Calu3 (cell line): ENCODE measurements at regions of chr13 and their contacts with region 1.

Region 1: DNA sequence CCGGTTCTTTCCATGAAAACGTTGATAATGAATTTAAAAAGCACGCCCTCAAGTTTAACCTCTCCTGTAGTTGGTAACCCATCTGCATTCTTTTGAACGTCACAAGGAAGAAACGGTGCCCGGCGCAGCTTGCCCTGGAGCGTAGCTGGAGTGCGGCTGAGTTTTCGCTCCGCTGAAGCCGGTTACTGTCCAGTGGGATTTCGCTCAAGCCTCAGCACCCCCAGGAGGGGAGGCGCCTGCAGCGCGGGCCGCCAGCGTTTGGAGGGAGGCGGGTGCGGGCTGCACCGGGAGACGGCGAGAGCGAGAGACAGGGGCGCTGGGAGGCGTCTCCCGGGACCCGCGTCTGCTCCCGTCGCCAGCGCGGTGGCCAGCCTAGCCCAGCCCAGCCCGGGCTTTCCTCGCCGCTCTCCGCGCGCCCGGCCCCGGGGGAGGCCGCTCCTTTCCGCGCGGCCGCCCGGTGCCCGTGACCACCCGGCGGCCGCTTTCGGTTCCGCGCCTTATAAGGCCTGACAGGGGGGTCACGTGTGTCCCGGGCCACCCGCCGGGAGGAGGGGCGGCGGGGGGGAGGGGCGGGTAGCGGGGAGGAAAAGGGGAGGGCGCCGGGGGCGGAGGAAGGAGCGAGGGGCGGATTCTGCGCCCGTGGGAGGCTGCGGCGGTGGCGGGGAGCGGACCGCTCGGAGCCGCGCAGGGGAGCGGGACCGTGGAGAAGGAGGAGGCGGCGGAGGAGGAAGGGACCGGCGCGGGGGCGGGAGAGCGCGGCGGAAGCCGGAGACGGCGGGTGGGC is 8.3 kb upstream of the DGKH start:
- DNase-seq: peak; percentile 84
- H3K4me3 Mint-ChIP-seq: peak overlapping the region; percentile 86
- H3K27ac Mint-ChIP-seq: peak overlapping the region; percentile 62
- H3K4me1 Mint-ChIP-seq: peaks cover 9% of the 10 kb centered on the region
- H3K27me3 Mint-ChIP-seq: no peaks in the 10 kb centered on the region
- CTCF ChIP-seq: no peak

Region 2: DNA sequence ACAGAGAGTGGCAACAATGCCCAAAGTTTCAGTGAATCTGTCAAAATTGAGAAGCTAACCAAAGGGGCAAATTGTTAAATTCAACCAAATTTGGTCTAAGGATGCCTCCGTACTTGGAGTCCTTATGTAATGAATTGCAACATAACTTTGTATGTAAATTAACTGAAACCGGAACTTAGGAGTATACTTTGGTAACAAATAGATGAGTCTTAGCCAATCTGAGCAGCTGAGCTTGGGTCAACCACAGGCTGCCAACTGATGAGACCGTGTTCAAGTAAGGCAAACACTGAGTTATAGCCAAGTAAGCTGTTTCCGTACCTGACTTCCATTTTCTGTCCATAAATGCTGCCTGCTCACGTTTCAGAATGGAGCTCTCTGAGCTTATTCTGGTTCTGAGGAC is 84.5 kb before region 1 on chr13:
- CTCF ChIA-PET with region 1: interaction called, 6 read pairs
- intact Hi-C with region 1: loop called (anchors 5 kb)
- DNase-seq: no peak
- H3K4me3 Mint-ChIP-seq: no peak overlapping the region
- H3K27ac Mint-ChIP-seq: no peak overlapping the region
- H3K4me1 Mint-ChIP-seq: peaks cover 37% of the 10 kb centered on the region
- H3K27me3 Mint-ChIP-seq: no peaks in the 10 kb centered on the region
- CTCF ChIP-seq: no peak